ENCODE measurements at regions of chr2 and their contacts with region 1.

Region 1: GRCh38 chr2:99559075-99559662 is 69.4 kb upstream of the REV1 start:
- DNase-seq: peak; percentile 78
- CTCF ChIP-seq: peak; percentile 94

Region 2: GRCh38 chr2:99572373-99573164 is 13.4 kb after region 1 on chr2:
- CTCF ChIA-PET with region 1: interaction called, 35 read pairs
- POLR2A ChIA-PET with region 1: no interaction called
- DNase-seq: no peak
- CTCF ChIP-seq: no peak

Region 3: GRCh38 chr2:100242891-100243619 is 683.9 kb after region 1 on chr2:
- CTCF ChIA-PET with region 1: interaction called, 35 read pairs
- POLR2A ChIA-PET with region 1: no interaction called
- DNase-seq: peak; percentile 76
- CTCF ChIP-seq: peak; percentile 87